ENCODE measurements at regions of chr4 and their contacts with region 1.

Region 1: DNA sequence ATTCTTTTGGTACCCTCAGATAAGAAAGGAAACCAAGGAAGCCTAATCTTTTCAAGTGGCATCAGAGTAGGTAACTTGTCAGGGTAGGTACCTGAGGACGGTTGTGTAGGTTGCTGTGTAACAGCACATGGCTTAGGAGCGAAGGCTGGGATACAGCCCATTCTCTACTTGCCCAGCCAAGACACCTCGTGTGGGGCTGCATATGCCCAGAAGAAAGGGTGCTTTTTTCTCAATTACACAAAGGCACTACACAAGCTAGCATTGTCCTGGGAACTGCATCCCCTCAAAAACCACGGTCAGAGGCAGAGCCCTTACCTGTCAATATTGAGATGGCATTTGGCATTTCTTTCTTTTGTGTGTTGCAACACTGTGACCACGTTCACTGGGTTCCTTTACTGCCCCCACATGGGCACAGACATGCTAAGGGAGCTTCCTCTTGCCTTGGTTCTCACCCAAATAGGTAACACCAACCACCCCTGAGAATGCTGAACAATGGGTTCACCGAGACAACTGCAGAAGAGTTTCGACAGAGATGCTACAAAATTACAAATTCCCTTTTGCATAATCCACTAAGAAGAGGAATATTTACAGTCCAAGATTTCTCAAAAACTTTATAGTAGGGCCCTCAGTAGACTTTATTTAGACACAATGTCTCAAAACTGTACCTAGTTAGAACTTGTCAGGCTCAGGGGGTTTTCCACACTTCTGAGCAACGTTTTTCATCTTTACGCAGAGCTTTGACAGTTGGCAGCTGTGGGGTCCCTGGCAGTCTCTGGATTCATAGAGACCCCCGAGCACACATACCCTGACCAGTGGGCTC is 35.8 kb upstream of the TNIP3 start:
- DNase-seq: peak; percentile 81
- ATAC-seq: peak; percentile 90
- H3K4me3 ChIP-seq: peak overlapping the region; percentile 24; the same call in 1 of the 2 replicates
- H3K27ac ChIP-seq: peak overlapping the region; percentile 76
- H3K4me1 ChIP-seq: peaks cover 20% of the 10 kb centered on the region
- H3K27me3 ChIP-seq: no peaks in the 10 kb centered on the region
- CTCF ChIP-seq: peak; percentile 19 to 33 (median 30); a peak in 4 of 6 replicates
- EP300 ChIP-seq: peak in 1 of 2 experiments; percentile 30; a peak in 1 of 4 replicates
- POLR2A ChIP-seq: no peak
- RAD21 ChIP-seq: peak; percentile 30; the same call in 1 of the 2 replicates

Region 2: DNA sequence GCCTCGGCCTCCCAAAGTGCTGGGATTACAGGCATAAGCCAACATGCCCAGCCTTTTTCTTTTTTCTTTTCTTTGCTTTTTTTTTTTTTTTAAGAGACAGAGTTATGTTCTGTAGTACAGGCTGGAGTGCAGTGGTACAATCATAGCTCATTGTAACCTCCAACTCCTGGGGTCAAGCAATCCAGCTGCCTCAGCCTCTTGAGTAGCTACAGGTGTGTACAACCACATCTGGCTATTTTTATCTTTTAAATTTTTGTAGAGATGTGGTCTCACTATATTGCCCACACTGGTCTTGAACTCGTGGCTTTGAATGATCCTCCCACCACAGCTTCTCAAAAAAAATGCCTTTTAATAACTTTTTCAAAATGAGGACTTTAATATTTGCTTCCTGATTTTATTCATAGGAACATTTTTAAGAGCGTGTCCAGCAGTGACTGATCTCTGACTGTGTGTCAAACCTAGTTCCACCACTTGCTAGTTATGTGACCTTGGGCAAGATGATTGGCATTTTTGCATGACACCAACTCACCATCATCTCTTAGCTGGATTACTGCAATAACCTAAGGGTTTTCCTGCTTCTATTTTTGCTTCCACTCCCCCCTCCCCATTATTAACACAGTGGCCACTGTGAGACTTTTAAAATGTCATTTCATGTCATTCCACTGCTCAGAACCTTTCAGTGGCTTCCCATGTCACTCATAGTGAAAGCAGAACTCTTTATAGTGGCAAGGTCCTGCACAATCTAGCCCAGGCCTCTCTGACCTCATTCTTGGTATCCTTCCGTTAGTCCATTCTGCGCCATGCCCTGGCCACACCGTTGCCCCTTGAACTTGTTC is 31.3 kb before region 1 on chr4:
- CTCF ChIA-PET with region 1: interaction called, 3 read pairs
- POLR2A ChIA-PET with region 1: no interaction called
- RAD21 ChIA-PET with region 1: interaction called, 13 read pairs
- SMC1A ChIA-PET with region 1: no interaction called
- in situ Hi-C with region 1: no loop called
- intact Hi-C with region 1: no loop called
- DNase-seq: peak; percentile 71
- ATAC-seq: peak; percentile 97
- H3K4me3 ChIP-seq: no peak overlapping the region
- H3K27ac ChIP-seq: no peak overlapping the region
- H3K4me1 ChIP-seq: peaks cover 18% of the 10 kb centered on the region
- H3K27me3 ChIP-seq: no peaks in the 10 kb centered on the region
- CTCF ChIP-seq: no peak
- EP300 ChIP-seq: peak; percentile 76 to 87; a peak in 3 of 4 replicates
- POLR2A ChIP-seq: no peak
- RAD21 ChIP-seq: no peak

Region 3: DNA sequence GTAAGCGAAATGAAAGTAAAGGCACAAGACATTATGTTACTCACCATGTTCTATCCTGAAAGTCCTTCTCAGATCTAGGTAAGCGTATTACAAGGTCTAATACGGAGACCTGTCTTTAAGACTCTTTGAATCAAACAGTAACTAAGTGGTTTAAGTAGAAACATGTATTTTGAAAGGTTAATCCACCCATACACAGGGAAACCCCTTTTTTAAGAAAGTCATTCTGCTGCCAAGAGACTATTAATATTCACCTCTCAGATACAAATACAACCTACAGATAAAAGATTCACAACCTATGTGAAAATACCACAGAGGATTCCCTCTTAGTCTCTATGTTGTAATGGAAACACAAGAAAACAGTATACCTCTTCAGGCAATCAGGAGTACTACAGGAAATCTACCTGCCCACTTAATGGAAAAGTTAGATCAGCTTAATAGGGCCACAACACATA is 27.4 kb after region 1 on chr4:
- CTCF ChIA-PET with region 1: interaction called, 7 read pairs
- POLR2A ChIA-PET with region 1: no interaction called
- RAD21 ChIA-PET with region 1: interaction called, 10 read pairs
- SMC1A ChIA-PET with region 1: interaction called, 8 read pairs
- in situ Hi-C with region 1: no loop called
- intact Hi-C with region 1: no loop called
- DNase-seq: peak; percentile 24
- ATAC-seq: peak; percentile 90
- H3K4me3 ChIP-seq: no peak overlapping the region
- H3K27ac ChIP-seq: no peak overlapping the region; the same call in 1 of the 2 replicates
- H3K4me1 ChIP-seq: no peaks in the 10 kb centered on the region
- H3K27me3 ChIP-seq: no peaks in the 10 kb centered on the region
- CTCF ChIP-seq: 0 out of 6 replicates have a peak, but pooled peaks of 1 of the 3 experiments have one; percentile 17
- EP300 ChIP-seq: no peak
- POLR2A ChIP-seq: no peak
- RAD21 ChIP-seq: no peak